HCT116 (cell line): ENCODE measurements at regions of chr3 and their contacts with region 1.

Region 1: DNA sequence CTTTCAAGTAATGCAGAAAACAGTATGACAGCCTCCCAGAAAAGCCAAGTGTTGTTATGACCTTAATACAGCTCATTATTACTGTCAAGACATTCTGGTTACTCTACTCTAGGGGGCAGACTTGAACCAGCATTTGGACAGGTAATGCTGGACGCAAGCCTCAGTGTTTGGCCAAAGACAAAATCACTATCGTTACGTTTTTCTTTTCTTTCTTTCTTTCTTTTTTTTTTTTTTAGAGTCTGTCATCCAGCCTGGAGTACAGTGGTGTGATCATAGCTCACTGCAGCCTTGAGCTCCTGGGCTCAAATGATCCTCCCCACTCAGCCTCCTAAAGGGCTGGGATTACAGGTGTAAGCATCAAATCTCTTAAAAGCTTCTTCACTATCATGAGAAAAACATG is 29.4 kb upstream of the TMEM45A start:
- DNase-seq: peak; percentile 45
- ATAC-seq: peak; percentile 98
- H3K4me3 ChIP-seq: no peak overlapping the region
- H3K27ac ChIP-seq: no peak overlapping the region
- H3K4me1 ChIP-seq: peaks cover 0 to 4% of the 10 kb centered on the region in 2 experiments; a peak in 1 of 4 replicates
- H3K27me3 ChIP-seq: no peaks in the 10 kb centered on the region
- CTCF ChIP-seq: peak; percentile 65 to 85 (median 80); a peak in 5 of 6 replicates
- POLR2A ChIP-seq: no peak
- RAD21 ChIP-seq: peak; percentile 92

Region 2: GRCh38 chr3:100254168-100254777 is 208.7 kb before region 1 on chr3:
- CTCF ChIA-PET with region 1: no interaction called
- POLR2A ChIA-PET with region 1: no interaction called
- RAD21 ChIA-PET with region 1: no interaction called
- intact Hi-C with region 1: no loop called
- DNase-seq: peak; percentile 73
- ATAC-seq: peak; percentile 97
- H3K4me3 ChIP-seq: no peak overlapping the region
- H3K27ac ChIP-seq: no peak overlapping the region
- H3K4me1 ChIP-seq: no peaks in the 10 kb centered on the region
- H3K27me3 ChIP-seq: no peaks in the 10 kb centered on the region
- CTCF ChIP-seq: peak; percentile 76; a peak in 5 of 6 replicates
- POLR2A ChIP-seq: no peak
- RAD21 ChIP-seq: peak; percentile 93

Region 3: GRCh38 chr3:100316641-100317069 is 146.3 kb before region 1 on chr3:
- CTCF ChIA-PET with region 1: interaction called, 4 read pairs
- POLR2A ChIA-PET with region 1: no interaction called
- RAD21 ChIA-PET with region 1: no interaction called
- intact Hi-C with region 1: loop called (anchors 5 kb)
- DNase-seq: peak; percentile 46
- ATAC-seq: peak; percentile 86
- H3K4me3 ChIP-seq: no peak overlapping the region
- H3K27ac ChIP-seq: no peak overlapping the region
- H3K4me1 ChIP-seq: peaks cover 3 to 4% of the 10 kb centered on the region in 2 experiments; a peak in 2 of 4 replicates
- H3K27me3 ChIP-seq: no peaks in the 10 kb centered on the region
- CTCF ChIP-seq: peak; percentile 32 to 71 (median 65); a peak in 5 of 6 replicates
- POLR2A ChIP-seq: no peak
- RAD21 ChIP-seq: peak; percentile 73

Region 4: GRCh38 chr3:100603469-100603868 is 140.5 kb after region 1 on chr3:
- CTCF ChIA-PET with region 1: interaction called, 36 read pairs
- POLR2A ChIA-PET with region 1: no interaction called
- RAD21 ChIA-PET with region 1: interaction called in 1 of 2 experiments, 3 read pairs
- intact Hi-C with region 1: no loop called
- DNase-seq: peak; percentile 41
- ATAC-seq: peak; percentile 94
- H3K4me3 ChIP-seq: no peak overlapping the region
- H3K27ac ChIP-seq: no peak overlapping the region
- H3K4me1 ChIP-seq: peaks cover 3 to 19% of the 10 kb centered on the region in 2 experiments; a peak in 3 of 4 replicates
- H3K27me3 ChIP-seq: no peaks in the 10 kb centered on the region
- CTCF ChIP-seq: peak; percentile 53 to 71 (median 66); a peak in 5 of 6 replicates
- POLR2A ChIP-seq: no peak
- RAD21 ChIP-seq: peak; percentile 65

Region 5: DNA sequence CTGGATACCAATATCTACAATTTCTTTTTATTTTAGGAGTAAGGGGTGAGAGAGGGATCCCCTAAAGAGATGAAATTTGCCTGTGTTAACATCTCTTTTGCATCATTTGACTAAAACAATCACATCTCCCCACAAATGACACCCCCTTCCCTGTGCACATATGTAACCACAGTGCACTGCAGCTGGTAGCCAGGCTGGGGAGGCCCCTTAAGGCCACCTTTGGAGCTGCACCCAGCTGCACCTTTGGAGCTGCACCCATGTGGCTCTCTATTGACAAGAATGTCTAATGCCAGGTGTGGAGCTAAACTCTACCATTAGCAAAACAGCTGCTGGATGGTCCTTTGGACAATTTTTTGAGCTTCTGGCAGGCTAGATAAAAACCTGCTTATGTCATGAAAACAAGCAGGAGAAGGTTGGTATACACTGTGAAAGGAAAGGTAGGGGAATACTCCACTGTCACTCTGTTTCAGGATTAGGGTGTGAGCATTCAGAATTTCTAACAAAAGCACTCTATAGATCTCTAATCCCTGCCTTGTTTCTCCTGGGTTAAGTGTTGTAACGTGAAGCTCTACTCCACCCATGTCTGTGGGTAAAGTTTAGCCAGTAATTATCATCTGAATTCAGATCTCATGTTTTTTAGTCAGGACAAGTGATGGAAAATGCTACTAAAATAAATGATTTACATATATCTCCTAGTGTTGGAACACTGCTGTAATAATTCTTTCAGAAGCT is 298.4 kb after region 1 on chr3:
- CTCF ChIA-PET with region 1: interaction called, 11 read pairs
- POLR2A ChIA-PET with region 1: no interaction called
- RAD21 ChIA-PET with region 1: no interaction called
- intact Hi-C with region 1: no loop called
- DNase-seq: no peak
- ATAC-seq: peak; percentile 99
- H3K4me3 ChIP-seq: no peak overlapping the region
- H3K27ac ChIP-seq: no peak overlapping the region
- H3K4me1 ChIP-seq: peaks cover 0 to 3% of the 10 kb centered on the region in 2 experiments; a peak in 1 of 4 replicates
- H3K27me3 ChIP-seq: no peaks in the 10 kb centered on the region
- CTCF ChIP-seq: peak in 2 of 3 experiments; percentile 60 to 63; a peak in 4 of 6 replicates
- POLR2A ChIP-seq: no peak
- RAD21 ChIP-seq: peak; percentile 26; the same call in 1 of the 2 replicates

Region 6: GRCh38 chr3:100882571-100882984 is 419.6 kb after region 1 on chr3:
- CTCF ChIA-PET with region 1: no interaction called
- POLR2A ChIA-PET with region 1: no interaction called
- RAD21 ChIA-PET with region 1: no interaction called
- intact Hi-C with region 1: no loop called
- DNase-seq: no peak
- ATAC-seq: no peak
- H3K4me3 ChIP-seq: no peak overlapping the region
- H3K27ac ChIP-seq: no peak overlapping the region
- H3K4me1 ChIP-seq: no peaks in the 10 kb centered on the region
- H3K27me3 ChIP-seq: no peaks in the 10 kb centered on the region
- CTCF ChIP-seq: no peak
- POLR2A ChIP-seq: no peak
- RAD21 ChIP-seq: no peak

Region 7: GRCh38 chr3:100893590-100893989 is 430.6 kb after region 1 on chr3:
- CTCF ChIA-PET with region 1: interaction called, 3 read pairs
- POLR2A ChIA-PET with region 1: no interaction called
- RAD21 ChIA-PET with region 1: no interaction called
- intact Hi-C with region 1: loop called (anchors 5 kb)
- DNase-seq: no peak
- ATAC-seq: peak; percentile 75
- H3K4me3 ChIP-seq: no peak overlapping the region
- H3K27ac ChIP-seq: no peak overlapping the region
- H3K4me1 ChIP-seq: no peaks in the 10 kb centered on the region
- H3K27me3 ChIP-seq: no peaks in the 10 kb centered on the region
- CTCF ChIP-seq: peak; percentile 53 to 71 (median 58); a peak in 5 of 6 replicates
- POLR2A ChIP-seq: no peak
- RAD21 ChIP-seq: peak; percentile 78

Region 8: DNA sequence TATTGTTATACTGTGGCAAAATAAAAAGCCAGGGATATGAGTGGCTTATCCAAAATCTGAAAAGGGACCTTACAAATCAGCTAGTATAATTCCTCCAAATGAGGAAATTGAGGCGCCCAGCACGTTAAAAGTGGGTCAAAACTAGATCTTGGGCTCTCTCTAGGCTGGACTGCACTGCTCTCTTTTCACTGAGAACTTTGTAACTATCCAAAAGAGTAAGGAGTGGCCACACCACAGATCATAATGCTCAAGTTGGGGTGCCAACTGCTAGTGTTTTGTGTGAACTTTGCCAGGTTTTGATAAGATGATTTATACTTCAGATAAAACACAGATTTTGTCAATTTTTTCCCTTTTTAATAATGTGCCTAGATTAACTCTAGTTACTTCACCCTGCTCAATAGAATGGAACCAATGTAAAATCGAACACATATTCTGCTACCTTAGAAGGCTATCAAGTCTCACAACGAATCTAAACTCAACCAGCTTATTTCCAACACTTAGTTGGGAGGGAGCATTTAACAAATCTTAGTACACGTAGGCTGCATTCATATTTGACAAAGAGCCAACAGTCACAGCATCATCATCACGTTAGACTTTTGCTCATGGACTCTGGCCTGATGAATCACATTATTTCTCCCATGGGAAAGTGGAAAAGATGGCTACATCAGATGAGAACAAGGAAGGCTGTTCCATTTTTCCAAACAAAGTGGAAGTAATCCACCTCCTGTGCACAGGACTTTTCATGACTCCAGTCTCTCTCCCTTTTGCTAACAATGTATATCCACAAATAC is 465.8 kb after region 1 on chr3:
- CTCF ChIA-PET with region 1: no interaction called
- POLR2A ChIA-PET with region 1: no interaction called
- RAD21 ChIA-PET with region 1: no interaction called
- intact Hi-C with region 1: no loop called
- DNase-seq: no peak
- ATAC-seq: no peak
- H3K4me3 ChIP-seq: no peak overlapping the region
- H3K27ac ChIP-seq: no peak overlapping the region
- H3K4me1 ChIP-seq: no peaks in the 10 kb centered on the region
- H3K27me3 ChIP-seq: no peaks in the 10 kb centered on the region
- CTCF ChIP-seq: no peak
- POLR2A ChIP-seq: no peak
- RAD21 ChIP-seq: no peak

Region 9: DNA sequence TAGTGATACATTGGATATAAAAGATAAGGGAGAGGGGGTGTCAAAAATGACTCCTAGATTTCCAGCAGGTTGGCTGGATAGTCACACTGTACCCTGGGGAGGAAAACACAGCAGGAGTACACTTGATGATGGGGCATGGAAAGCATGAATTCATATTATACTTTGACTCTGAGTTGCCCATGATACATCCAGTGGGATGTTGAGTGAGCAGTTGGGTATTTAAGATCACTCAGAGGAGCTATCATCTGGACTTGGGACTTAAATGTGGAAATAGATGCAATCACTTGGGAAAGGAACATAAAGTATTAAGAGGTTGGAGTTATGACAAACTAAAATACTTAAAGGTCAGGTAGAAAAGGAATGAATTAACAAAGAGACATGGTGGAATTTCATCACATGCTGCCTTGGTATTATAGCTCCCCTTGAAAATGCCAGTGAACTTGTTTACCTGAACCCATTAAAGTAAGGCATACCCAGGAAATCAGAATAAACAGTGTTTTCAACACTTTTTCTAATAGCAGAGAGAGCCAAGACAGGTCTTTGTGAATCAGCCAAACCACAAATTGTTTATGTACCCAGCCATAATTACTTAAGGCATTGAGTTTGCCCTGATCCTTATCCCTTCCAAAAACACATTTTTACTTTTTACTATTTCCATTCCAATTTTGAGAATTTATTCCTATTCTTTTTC is 580.1 kb after region 1 on chr3:
- CTCF ChIA-PET with region 1: no interaction called
- POLR2A ChIA-PET with region 1: no interaction called
- RAD21 ChIA-PET with region 1: no interaction called
- intact Hi-C with region 1: no loop called
- DNase-seq: no peak
- ATAC-seq: no peak
- H3K4me3 ChIP-seq: no peak overlapping the region
- H3K27ac ChIP-seq: no peak overlapping the region
- H3K4me1 ChIP-seq: peaks cover 2 to 11% of the 10 kb centered on the region in 2 experiments; a peak in 1 of 4 replicates
- H3K27me3 ChIP-seq: no peaks in the 10 kb centered on the region
- CTCF ChIP-seq: no peak
- POLR2A ChIP-seq: no peak
- RAD21 ChIP-seq: no peak